Activated B cell treated with CpG ODN at 0.5 μM for 24 hours (primary cell): ENCODE measurements at regions of chr2 and their contacts with region 1.

Region 1: DNA sequence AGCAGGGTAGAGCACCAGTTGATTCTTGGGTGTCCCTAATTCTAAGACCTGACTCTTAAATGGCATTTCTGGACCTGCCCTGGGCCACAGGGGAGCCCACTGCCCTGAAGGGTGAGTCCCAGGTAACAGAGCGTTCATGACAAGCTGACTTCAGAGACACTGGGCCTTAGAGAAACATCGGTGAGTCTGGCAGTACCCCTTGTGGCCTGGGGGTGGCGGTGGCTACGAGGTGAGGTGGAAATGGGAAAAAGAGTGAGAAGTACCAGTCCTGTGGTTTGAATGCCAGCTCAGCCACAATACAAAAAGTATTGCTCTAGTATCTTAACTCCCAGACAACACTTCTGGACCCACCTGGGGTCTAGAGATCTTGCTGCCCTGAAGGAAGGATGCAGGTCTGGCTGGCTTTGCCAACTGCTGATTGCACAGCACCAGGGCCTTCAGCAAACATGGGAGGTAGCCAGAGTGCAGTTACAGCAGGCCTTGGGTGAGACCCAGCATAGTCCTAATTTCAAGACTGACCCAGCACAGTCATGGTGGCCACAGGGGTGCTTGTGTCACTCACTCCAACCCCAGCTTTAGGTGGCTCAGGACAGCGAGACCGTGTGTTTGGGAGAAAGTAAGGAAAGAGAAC is 44.5 kb downstream of the USP34 start:
- DNase-seq: peak; percentile 62
- ATAC-seq: peak; percentile 89
- H3K4me3 Mint-ChIP-seq: peak overlapping the region; percentile 19
- H3K27ac Mint-ChIP-seq: peak overlapping the region; percentile 92
- H3K4me1 Mint-ChIP-seq: peaks cover 69% of the 10 kb centered on the region
- H3K27me3 Mint-ChIP-seq: no peaks in the 10 kb centered on the region
- CTCF ChIP-seq: no peak

Region 2: GRCh38 chr2:61380056-61380881 is 46.1 kb before region 1 on chr2:
- CTCF ChIA-PET with region 1: no interaction called
- POLR2A ChIA-PET with region 1: no interaction called
- intact Hi-C with region 1: no loop called
- DNase-seq: no peak
- ATAC-seq: no peak
- H3K4me3 Mint-ChIP-seq: no peak overlapping the region
- H3K27ac Mint-ChIP-seq: no peak overlapping the region
- H3K4me1 Mint-ChIP-seq: peaks cover 2% of the 10 kb centered on the region
- H3K27me3 Mint-ChIP-seq: no peaks in the 10 kb centered on the region
- CTCF ChIP-seq: no peak

Region 3: GRCh38 chr2:61463769-61464475 is 37.5 kb after region 1 on chr2:
- CTCF ChIA-PET with region 1: interaction called, 5 read pairs
- POLR2A ChIA-PET with region 1: interaction called, 7 read pairs
- intact Hi-C with region 1: loop called (anchors 1 kb)
- DNase-seq: no peak
- ATAC-seq: peak; percentile 29
- H3K4me3 Mint-ChIP-seq: peak overlapping the region; percentile 66
- H3K27ac Mint-ChIP-seq: peak overlapping the region; percentile 81
- H3K4me1 Mint-ChIP-seq: peaks cover 66% of the 10 kb centered on the region
- H3K27me3 Mint-ChIP-seq: no peaks in the 10 kb centered on the region
- CTCF ChIP-seq: no peak

Region 4: GRCh38 chr2:61478086-61478485 is 51.7 kb after region 1 on chr2:
- CTCF ChIA-PET with region 1: interaction called, 27 read pairs
- POLR2A ChIA-PET with region 1: interaction called, 26 read pairs
- intact Hi-C with region 1: loop called (anchors 1 kb)
- DNase-seq: no peak
- ATAC-seq: no peak
- H3K4me3 Mint-ChIP-seq: no peak overlapping the region
- H3K27ac Mint-ChIP-seq: no peak overlapping the region
- H3K4me1 Mint-ChIP-seq: no peaks in the 10 kb centered on the region
- H3K27me3 Mint-ChIP-seq: no peaks in the 10 kb centered on the region
- CTCF ChIP-seq: no peak

Region 5: DNA sequence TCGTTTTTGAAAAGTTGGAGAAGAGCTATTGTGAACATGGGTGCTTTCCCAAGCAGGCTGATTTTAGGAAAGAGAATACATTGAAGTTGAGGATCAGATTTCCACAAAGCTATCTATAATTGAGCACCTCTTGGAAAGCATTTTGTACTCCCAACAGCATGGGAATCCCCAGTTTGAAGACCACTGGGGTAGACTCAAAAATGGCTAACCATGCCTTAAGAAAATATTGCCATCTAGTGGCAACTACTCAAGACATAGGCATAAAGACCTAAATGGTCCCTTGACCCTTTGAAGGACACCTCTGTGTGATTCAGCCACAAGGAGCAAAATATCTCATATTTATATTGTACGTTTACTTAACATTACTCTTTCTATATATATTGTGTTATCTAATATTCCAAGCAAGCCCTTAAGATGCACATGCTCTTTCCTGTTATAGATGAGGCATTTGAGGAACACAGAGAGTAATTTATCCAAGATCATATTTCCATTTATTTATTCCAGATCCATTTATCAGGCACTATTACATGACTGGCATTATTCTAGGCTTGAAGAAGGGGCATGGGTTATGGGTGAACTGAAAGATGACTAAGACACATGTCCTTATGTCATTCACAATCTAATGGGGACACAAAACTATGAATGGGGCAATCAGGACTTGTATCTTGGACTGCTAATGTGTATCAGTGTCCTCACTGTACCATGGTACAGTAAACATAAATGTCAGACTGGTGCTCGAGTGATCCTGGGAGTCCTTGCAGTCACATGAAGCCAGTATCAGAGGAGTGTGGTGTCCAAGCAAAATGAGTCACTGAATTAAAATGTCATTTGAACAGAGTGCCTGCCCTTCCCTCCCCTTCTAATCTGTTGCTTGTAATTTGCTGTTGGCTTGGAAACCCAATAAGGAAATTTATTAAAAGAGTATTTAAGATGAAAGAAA is 232.7 kb after region 1 on chr2:
- CTCF ChIA-PET with region 1: interaction called, 10 read pairs
- POLR2A ChIA-PET with region 1: no interaction called
- intact Hi-C with region 1: loop called (anchors 1 kb)
- DNase-seq: no peak
- ATAC-seq: no peak
- H3K4me3 Mint-ChIP-seq: no peak overlapping the region
- H3K27ac Mint-ChIP-seq: no peak overlapping the region
- H3K4me1 Mint-ChIP-seq: peaks cover 2% of the 10 kb centered on the region
- H3K27me3 Mint-ChIP-seq: no peaks in the 10 kb centered on the region
- CTCF ChIP-seq: no peak

Region 6: GRCh38 chr2:61853086-61853846 is 426.9 kb after region 1 on chr2:
- CTCF ChIA-PET with region 1: no interaction called
- POLR2A ChIA-PET with region 1: no interaction called
- intact Hi-C with region 1: no loop called
- DNase-seq: no peak
- ATAC-seq: peak; percentile 58
- H3K4me3 Mint-ChIP-seq: peak overlapping the region; percentile 94
- H3K27ac Mint-ChIP-seq: peak overlapping the region; percentile 95
- H3K4me1 Mint-ChIP-seq: peaks cover 19% of the 10 kb centered on the region
- H3K27me3 Mint-ChIP-seq: no peaks in the 10 kb centered on the region
- CTCF ChIP-seq: no peak

Region 7: GRCh38 chr2:62596061-62596921 is 1169.9 kb after region 1 on chr2:
- CTCF ChIA-PET with region 1: no interaction called
- POLR2A ChIA-PET with region 1: no interaction called
- intact Hi-C with region 1: no loop called
- DNase-seq: no peak
- ATAC-seq: no peak
- H3K4me3 Mint-ChIP-seq: no peak overlapping the region
- H3K27ac Mint-ChIP-seq: no peak overlapping the region
- H3K4me1 Mint-ChIP-seq: peaks cover 33% of the 10 kb centered on the region
- H3K27me3 Mint-ChIP-seq: no peaks in the 10 kb centered on the region
- CTCF ChIP-seq: no peak